ENCODE measurements at regions of chr10 and their contacts with region 1.

Region 1: DNA sequence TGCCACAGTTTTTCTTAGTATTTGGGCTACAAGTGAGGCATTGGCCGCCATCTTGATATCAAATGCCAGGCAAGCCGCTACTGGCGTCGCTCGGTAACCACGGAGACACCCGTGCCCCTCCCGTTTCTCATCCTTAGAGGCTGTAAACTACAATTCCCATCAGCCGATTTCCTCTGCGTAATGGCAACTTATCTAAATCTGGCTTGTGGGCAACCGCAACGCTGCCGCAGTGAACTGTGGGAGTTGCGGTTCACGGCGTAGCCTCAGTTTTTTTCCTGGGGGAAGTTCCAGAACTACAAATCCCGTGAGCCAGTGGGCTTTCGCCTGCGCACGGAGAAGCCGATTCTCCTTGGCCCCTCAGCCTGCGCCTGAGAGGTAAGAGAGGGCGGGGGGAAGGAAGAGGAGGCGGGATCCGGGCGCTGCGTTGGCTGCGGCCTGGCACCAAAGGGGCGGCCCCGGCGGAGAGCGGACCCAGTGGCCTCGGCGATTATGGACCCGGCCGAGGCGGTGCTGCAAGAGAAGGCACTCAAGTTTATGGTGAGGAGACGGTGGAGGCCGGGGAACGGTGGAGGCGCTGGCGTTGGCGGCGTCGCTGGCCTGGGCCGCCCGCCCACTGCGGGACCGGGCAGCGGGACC is at the start of gene BTRC:
- DNase-seq: peak; percentile 87 to 99 (median 92)
- ATAC-seq: peak; percentile 94
- H3K4me3 ChIP-seq: peak within 1 kb of the TSS; percentile 79
- H3K4me3 Mint-ChIP-seq: peak within 1 kb of the TSS; percentile 100
- H3K27ac ChIP-seq: peak within 1 kb of the TSS; percentile 26 to 86
- H3K27ac Mint-ChIP-seq: peak within 1 kb of the TSS; percentile 94
- H3K4me1 ChIP-seq: peaks cover 17% of the 10 kb centered on the region
- H3K4me1 Mint-ChIP-seq: peaks cover 39% of the 10 kb centered on the region
- H3K27me3 ChIP-seq: peaks cover 0 to 5% of the 10 kb centered on the region in 2 experiments
- H3K27me3 Mint-ChIP-seq: peaks cover 17% of the 10 kb centered on the region
- CTCF ChIP-seq: no peak
- total RNA-seq, gene BTRC: 13.1 to 13.2 TPM

Region 2: DNA sequence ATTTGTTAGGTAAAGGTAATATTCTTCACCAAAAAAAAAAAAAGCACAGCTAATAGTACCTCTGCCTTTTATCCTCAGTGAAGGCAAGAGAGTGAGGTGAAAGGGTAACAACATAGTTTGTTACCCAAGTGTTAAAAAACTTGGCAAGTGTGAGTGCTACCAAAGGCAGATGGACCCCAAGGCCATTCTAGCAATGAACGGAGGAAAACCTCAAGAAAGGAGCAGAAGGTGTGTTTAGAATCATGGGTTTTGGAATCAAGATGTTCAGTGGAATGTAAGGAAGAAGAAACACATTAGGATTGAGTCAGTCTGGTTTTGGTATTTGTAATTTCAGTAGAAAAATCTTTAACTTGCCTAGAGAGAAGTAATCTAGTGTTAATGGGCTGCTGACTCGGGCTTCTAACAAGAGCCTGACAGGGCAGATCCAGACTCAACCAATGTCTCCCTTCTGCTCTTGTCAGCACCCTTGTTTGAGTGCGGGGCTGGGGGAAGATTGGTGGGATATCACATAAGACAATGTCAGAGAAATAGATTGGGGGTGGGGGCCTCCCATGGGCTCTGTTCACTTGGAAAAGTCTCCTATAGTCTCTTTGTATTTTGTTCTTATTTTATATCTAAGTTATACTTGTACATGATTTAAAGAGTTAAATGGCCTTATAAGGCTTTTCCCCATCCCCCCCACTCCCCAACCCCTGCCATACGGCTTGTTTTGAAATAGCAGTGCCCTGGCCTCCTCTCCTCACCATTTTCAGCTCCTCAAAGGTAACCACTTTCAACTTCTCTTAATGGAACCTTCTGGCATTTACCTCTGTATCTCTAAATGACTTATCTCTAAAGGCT is 962.4 kb before region 1 on chr10:
- CTCF ChIA-PET with region 1: no interaction called
- POLR2A ChIA-PET with region 1: no interaction called
- intact Hi-C with region 1: no loop called
- DNase-seq: no peak
- ATAC-seq: no peak
- H3K4me3 ChIP-seq: no peak overlapping the region
- H3K4me3 Mint-ChIP-seq: no peak overlapping the region
- H3K27ac ChIP-seq: no peak overlapping the region
- H3K27ac Mint-ChIP-seq: no peak overlapping the region
- H3K4me1 ChIP-seq: no peaks in the 10 kb centered on the region
- H3K4me1 Mint-ChIP-seq: no peaks in the 10 kb centered on the region
- H3K27me3 ChIP-seq: no peaks in the 10 kb centered on the region
- H3K27me3 Mint-ChIP-seq: no peaks in the 10 kb centered on the region
- CTCF ChIP-seq: no peak

Region 3: DNA sequence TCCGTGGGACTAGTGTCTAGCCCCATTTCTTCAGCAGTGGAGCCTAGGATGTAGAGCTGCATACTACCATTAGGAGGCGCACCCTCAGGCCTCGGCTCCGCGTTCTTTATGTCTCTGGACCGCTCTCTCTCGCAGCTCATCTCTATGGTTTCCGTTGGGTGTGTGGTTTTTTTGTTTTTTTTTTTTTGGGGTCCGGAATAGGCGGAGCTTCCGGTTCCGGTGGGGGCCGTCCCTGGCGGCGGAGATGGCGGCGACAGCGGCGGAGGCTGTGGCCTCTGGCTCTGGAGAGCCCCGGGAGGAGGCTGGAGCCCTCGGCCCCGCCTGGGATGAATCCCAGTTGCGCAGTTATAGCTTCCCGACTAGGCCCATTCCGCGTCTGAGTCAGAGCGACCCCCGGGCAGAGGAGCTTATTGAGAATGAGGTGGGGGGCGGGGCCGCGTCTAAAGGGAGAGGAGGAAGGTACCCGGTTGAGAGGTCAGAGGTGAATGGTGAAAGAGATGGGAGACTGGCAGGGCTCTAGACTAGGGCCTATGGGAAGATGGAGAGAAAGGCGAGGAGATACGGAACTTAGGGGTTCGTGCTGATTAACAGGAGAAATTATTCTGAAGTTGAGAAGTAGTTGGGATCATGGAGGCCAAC is 818.0 kb before region 1 on chr10 and contains the start of gene HIF1AN:
- CTCF ChIA-PET with region 1: no interaction called
- POLR2A ChIA-PET with region 1: no interaction called
- intact Hi-C with region 1: loop called in 1 of 2 experiments (anchors 10 kb)
- DNase-seq: peak; percentile 75 to 97 (median 85)
- ATAC-seq: peak; percentile 99
- H3K4me3 ChIP-seq: peak within 1 kb of the TSS; percentile 77
- H3K4me3 Mint-ChIP-seq: peak within 1 kb of the TSS; percentile 31
- H3K27ac ChIP-seq: peak within 1 kb of the TSS; percentile 59 to 67
- H3K27ac Mint-ChIP-seq: peak within 1 kb of the TSS; percentile 27
- H3K4me1 ChIP-seq: peaks cover 20% of the 10 kb centered on the region
- H3K4me1 Mint-ChIP-seq: peaks cover 9% of the 10 kb centered on the region
- H3K27me3 ChIP-seq: no peaks in the 10 kb centered on the region
- H3K27me3 Mint-ChIP-seq: no peaks in the 10 kb centered on the region
- CTCF ChIP-seq: peak; percentile 88
- total RNA-seq, gene HIF1AN: 29.7 to 30.5 TPM

Region 4: GRCh38 chr10:101341438-101341837 is 12.4 kb before region 1 on chr10:
- CTCF ChIA-PET with region 1: no interaction called
- POLR2A ChIA-PET with region 1: no interaction called
- intact Hi-C with region 1: no loop called
- DNase-seq: no peak
- ATAC-seq: no peak
- H3K4me3 ChIP-seq: no peak overlapping the region
- H3K4me3 Mint-ChIP-seq: no peak overlapping the region
- H3K27ac ChIP-seq: no peak overlapping the region
- H3K27ac Mint-ChIP-seq: no peak overlapping the region
- H3K4me1 ChIP-seq: no peaks in the 10 kb centered on the region
- H3K4me1 Mint-ChIP-seq: no peaks in the 10 kb centered on the region
- H3K27me3 ChIP-seq: no peaks in the 10 kb centered on the region
- H3K27me3 Mint-ChIP-seq: peaks cover 10% of the 10 kb centered on the region
- CTCF ChIP-seq: no peak

Region 5: DNA sequence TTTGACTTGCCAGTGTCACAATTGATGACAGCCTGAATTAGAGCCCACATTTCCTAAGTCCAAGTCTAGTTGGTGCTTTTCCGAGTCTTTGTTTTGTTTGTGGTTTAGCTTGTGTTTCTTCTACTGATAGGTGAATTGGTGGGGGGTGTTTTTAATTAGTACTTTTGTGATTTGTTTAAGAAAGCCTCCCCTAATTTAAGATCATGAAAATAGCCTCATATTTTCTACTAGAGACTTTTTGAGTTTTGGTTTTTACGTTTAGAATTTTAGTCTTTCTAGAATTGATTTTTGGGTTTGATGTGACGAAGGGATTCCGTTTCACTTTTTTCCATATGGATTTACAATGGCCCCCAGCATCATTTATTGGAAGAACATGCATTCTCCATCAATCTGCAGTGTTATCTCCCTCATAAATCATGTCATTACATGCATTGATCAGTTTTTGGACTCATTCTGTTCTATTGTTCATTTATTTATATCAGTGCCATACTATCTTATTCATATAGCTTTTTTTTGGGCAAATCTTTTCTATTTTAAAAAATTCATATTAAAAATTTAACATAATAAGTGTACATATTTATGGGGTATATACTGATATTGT is 32.9 kb after region 1 on chr10:
- CTCF ChIA-PET with region 1: no interaction called
- POLR2A ChIA-PET with region 1: no interaction called
- intact Hi-C with region 1: no loop called
- DNase-seq: no peak
- ATAC-seq: no peak
- H3K4me3 ChIP-seq: no peak overlapping the region
- H3K4me3 Mint-ChIP-seq: no peak overlapping the region
- H3K27ac ChIP-seq: no peak overlapping the region
- H3K27ac Mint-ChIP-seq: no peak overlapping the region
- H3K4me1 ChIP-seq: no peaks in the 10 kb centered on the region
- H3K4me1 Mint-ChIP-seq: peaks cover 18% of the 10 kb centered on the region
- H3K27me3 ChIP-seq: no peaks in the 10 kb centered on the region
- H3K27me3 Mint-ChIP-seq: no peaks in the 10 kb centered on the region
- CTCF ChIP-seq: no peak

Region 6: DNA sequence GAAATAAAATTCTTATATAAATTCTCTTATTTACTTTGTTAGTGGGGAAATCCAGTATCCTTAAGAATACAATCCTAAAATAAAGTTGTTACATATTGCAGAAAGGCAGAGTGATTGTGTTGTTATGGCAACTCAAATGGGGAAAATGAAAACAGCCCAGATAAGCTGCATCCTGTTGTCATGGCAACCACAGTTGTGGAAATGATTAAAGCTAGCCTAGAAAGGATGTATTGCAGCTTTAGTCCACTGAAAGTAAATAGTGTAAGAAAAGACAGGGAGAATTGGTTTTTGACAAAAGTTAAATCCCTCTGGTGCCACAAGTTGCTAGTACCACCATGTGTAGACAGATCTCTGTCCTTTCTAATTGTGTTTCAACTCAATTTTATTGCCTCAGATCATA is 43.3 kb after region 1 on chr10:
- CTCF ChIA-PET with region 1: no interaction called
- POLR2A ChIA-PET with region 1: no interaction called
- intact Hi-C with region 1: loop called in 1 of 2 experiments (anchors 2 kb)
- DNase-seq: peak in 8 of 14 experiments; percentile 7 to 85 (median 32)
- ATAC-seq: peak; percentile 83
- H3K4me3 ChIP-seq: no peak overlapping the region
- H3K4me3 Mint-ChIP-seq: no peak overlapping the region
- H3K27ac ChIP-seq: no peak overlapping the region
- H3K27ac Mint-ChIP-seq: peak overlapping the region; percentile 46
- H3K4me1 ChIP-seq: peaks cover 8% of the 10 kb centered on the region
- H3K4me1 Mint-ChIP-seq: peaks cover 52% of the 10 kb centered on the region
- H3K27me3 ChIP-seq: no peaks in the 10 kb centered on the region
- H3K27me3 Mint-ChIP-seq: no peaks in the 10 kb centered on the region
- CTCF ChIP-seq: no peak

Region 7: DNA sequence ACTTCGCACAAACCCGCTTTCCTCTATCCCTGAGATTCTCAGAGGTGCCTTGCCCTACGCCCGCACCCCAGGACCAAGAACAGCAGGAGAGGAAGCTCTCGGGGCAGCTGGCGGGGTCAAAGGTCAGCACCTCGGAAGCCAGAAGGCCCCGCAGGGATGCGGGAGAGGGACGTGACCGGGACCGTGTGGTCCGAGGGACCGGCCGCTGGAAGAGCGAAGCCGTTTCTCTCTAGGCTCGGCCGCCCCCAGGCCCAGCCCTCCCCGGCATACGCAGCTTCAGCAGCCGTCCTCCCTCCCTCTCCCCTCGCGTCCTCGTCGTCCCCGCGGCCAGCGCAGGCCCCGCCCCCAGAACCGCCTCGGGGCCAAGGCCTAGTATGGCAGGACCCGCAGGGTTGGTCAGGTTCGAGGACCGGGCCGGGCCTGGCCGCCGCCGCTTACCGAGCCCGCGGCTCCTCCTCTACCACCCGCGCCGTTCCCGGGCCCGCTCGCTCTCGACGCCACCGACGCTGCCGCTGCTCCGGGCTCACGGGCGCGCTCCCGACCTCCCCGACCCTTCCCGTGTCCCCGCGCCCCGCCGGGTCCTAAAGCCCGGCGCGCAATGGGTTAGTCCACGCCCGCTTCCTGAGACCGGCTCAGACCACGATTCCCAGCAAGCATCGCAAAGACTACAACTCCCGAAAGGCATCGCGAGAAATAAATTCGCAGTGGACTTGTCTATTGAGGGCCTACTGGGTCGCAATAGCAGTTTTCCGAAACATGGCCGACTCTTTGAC is 702.0 kb after region 1 on chr10 and contains the start of gene ARMH3:
- CTCF ChIA-PET with region 1: no interaction called
- POLR2A ChIA-PET with region 1: no interaction called
- intact Hi-C with region 1: loop called in 1 of 2 experiments (anchors 5 kb)
- DNase-seq: peak; percentile 75 to 96 (median 84)
- ATAC-seq: peak; percentile 93
- H3K4me3 ChIP-seq: peak within 1 kb of the TSS; percentile 84
- H3K4me3 Mint-ChIP-seq: peak within 1 kb of the TSS; percentile 96
- H3K27ac ChIP-seq: peak within 1 kb of the TSS; percentile 70 to 83
- H3K27ac Mint-ChIP-seq: peak within 1 kb of the TSS; percentile 87
- H3K4me1 ChIP-seq: peaks cover 48% of the 10 kb centered on the region
- H3K4me1 Mint-ChIP-seq: peaks cover 45% of the 10 kb centered on the region
- H3K27me3 ChIP-seq: no peaks in the 10 kb centered on the region
- H3K27me3 Mint-ChIP-seq: no peaks in the 10 kb centered on the region
- CTCF ChIP-seq: no peak
- total RNA-seq, gene ARMH3: 17.7 to 18.9 TPM

Region 8: DNA sequence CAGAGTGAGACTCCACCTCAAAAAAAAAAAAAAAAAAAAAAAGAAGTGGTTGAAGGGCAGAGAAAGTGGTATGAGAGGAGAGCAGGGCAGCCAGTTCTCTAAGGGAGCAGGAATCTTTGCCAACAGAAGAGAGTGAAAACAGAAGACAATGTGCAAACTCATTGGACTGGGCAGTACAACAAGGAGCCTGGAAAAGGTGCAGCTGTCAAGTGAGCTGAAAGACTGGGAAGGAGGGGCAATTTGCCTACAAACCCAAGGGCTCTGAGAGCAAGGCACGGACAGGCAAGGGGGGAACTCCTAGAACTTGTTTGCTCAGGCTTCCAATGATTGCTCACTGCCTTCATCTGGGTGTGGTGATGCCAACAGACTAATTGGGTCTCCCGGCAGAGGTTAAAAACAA is 1139.2 kb after region 1 on chr10:
- CTCF ChIA-PET with region 1: no interaction called
- POLR2A ChIA-PET with region 1: no interaction called
- intact Hi-C with region 1: loop called in 1 of 2 experiments (anchors 10 kb)
- DNase-seq: no peak
- ATAC-seq: no peak
- H3K4me3 ChIP-seq: no peak overlapping the region
- H3K4me3 Mint-ChIP-seq: no peak overlapping the region
- H3K27ac ChIP-seq: no peak overlapping the region
- H3K27ac Mint-ChIP-seq: no peak overlapping the region
- H3K4me1 ChIP-seq: peaks cover 23% of the 10 kb centered on the region
- H3K4me1 Mint-ChIP-seq: peaks cover 16% of the 10 kb centered on the region
- H3K27me3 ChIP-seq: no peaks in the 10 kb centered on the region
- H3K27me3 Mint-ChIP-seq: no peaks in the 10 kb centered on the region
- CTCF ChIP-seq: no peak

Region 9: DNA sequence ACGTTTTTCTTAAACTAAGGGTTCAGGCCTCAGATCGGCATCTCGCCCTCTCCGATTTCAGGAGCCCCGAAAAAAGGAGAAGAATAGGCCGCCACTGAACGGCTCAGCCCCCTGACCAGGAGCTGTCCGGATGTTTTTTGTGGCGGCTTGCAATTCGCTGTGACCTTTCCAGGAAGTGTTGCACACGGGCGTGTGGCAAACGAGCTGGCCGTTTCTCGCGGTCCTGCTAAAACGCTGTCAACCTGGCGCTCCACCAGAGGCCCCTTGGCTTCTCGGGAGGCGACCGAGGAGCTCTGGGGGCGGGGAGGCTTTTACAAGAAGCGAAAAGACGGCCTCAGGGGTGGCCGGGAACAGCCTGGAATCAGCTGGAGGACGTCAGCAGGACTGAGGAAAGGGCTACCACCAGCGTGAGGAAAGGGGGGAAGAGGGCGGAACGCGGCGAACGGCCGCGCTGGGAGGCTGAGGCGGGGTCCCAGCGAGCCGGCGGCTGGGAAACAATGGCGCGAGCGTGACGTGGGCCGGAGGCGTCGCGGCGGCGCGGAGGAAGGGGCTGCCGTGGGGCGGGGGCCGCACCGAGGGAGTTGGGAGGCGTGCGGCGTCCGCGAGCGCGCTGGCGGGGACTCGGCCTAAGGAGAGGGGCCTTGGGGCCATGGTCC is 1838.8 kb after region 1 on chr10:
- CTCF ChIA-PET with region 1: no interaction called
- POLR2A ChIA-PET with region 1: no interaction called
- intact Hi-C with region 1: loop called in 1 of 2 experiments (anchors 10 kb)
- DNase-seq: peak; percentile 24 to 78 (median 40)
- ATAC-seq: peak; percentile 68
- H3K4me3 ChIP-seq: peak overlapping the region; percentile 79
- H3K4me3 Mint-ChIP-seq: peak overlapping the region; percentile 99
- H3K27ac ChIP-seq: peak overlapping the region; percentile 75 to 78
- H3K27ac Mint-ChIP-seq: peak overlapping the region; percentile 86
- H3K4me1 ChIP-seq: peaks cover 20% of the 10 kb centered on the region
- H3K4me1 Mint-ChIP-seq: peaks cover 49% of the 10 kb centered on the region
- H3K27me3 ChIP-seq: no peaks in the 10 kb centered on the region
- H3K27me3 Mint-ChIP-seq: no peaks in the 10 kb centered on the region
- CTCF ChIP-seq: no peak